ENCODE measurements at regions of chr15 and their contacts with region 1.

Region 1: GRCh38 chr15:78108299-78109084 is 16.1 kb downstream of the SH2D7 start:
- DNase-seq: peak; percentile 38
- ATAC-seq: peak; percentile 92
- H3K4me3 ChIP-seq: no peak overlapping the region
- H3K27ac ChIP-seq: no peak overlapping the region
- H3K4me1 ChIP-seq: no peaks in the 10 kb centered on the region
- H3K27me3 ChIP-seq: no peaks in the 10 kb centered on the region
- CTCF ChIP-seq: peak; percentile 95

Region 2: GRCh38 chr15:77959432-77959879 is 149.0 kb before region 1 on chr15:
- CTCF ChIA-PET with region 1: interaction called, 17 read pairs
- POLR2A ChIA-PET with region 1: no interaction called
- in situ Hi-C with region 1: no loop called
- intact Hi-C with region 1: loop called (anchors 2 kb)
- DNase-seq: no peak
- ATAC-seq: peak; percentile 100
- H3K4me3 ChIP-seq: peak overlapping the region; percentile 23 to 43
- H3K27ac ChIP-seq: no peak overlapping the region; the same call in 1 of the 2 replicates
- H3K4me1 ChIP-seq: peaks cover 3% of the 10 kb centered on the region; the same call in 1 of the 2 replicates
- H3K27me3 ChIP-seq: no peaks in the 10 kb centered on the region; the same call in 1 of the 2 replicates
- CTCF ChIP-seq: peak; percentile 97

Region 3: DNA sequence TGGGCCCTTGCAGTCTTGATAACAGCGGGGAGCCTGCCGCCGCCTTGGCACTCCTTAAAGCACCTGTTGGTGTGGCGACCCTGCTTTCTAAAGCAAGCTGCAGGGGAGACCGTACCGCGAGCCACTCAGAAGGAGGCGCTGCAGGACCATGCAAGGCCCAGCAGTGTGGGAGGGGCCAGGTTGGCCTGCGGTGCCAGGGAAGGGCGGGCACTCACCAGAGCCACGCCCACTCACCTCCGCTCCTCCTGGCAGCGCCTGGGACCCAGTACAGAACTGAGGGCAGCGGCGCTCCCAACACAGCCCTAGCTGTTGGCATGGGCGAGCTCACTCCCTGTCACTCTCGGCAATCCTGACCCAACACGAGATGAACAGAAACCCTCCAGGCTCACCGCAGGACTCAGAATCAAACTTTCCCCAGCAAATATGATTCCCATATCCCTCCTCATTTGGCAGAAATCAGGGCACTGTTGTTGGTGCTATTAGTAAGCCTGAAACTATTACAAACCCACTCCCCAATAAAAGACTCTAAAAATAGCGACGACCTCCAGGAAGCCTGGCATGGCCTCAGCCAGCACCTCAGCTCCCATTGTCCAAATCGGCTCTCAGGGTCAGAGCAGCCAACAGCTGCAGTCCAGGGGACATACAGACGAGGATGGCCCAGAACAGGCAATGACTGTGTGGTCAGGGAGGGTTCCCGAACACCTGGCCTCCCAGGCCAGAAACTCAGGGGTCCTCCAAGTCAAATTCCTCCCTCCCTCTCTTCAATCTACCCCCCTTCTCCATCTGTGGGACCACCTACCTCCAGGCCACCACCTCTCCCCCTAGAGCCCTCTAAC is 108.2 kb before region 1 on chr15:
- CTCF ChIA-PET with region 1: interaction called, 13 read pairs
- POLR2A ChIA-PET with region 1: no interaction called
- in situ Hi-C with region 1: no loop called
- intact Hi-C with region 1: loop called (anchors 1 kb)
- DNase-seq: no peak
- ATAC-seq: peak; percentile 92
- H3K4me3 ChIP-seq: no peak overlapping the region
- H3K27ac ChIP-seq: no peak overlapping the region
- H3K4me1 ChIP-seq: 0 out of 2 replicates have a peak, but pooled peaks cover 7% of the 10 kb centered on the region
- H3K27me3 ChIP-seq: no peaks in the 10 kb centered on the region
- CTCF ChIP-seq: no peak; the same call in 1 of the 2 replicates

Region 4: GRCh38 chr15:78149068-78149804 is 40.7 kb after region 1 on chr15 and contains the start of gene IDH3A:
- CTCF ChIA-PET with region 1: no interaction called
- POLR2A ChIA-PET with region 1: no interaction called
- in situ Hi-C with region 1: no loop called
- intact Hi-C with region 1: no loop called
- DNase-seq: peak; percentile 71
- ATAC-seq: peak; percentile 98
- H3K4me3 ChIP-seq: peak within 1 kb of the TSS; percentile 64 to 87
- H3K27ac ChIP-seq: peak within 1 kb of the TSS; percentile 93
- H3K4me1 ChIP-seq: peaks cover 13% of the 10 kb centered on the region
- H3K27me3 ChIP-seq: no peaks in the 10 kb centered on the region
- CTCF ChIP-seq: no peak
- total RNA-seq, gene IDH3A: 116 TPM

Region 5: DNA sequence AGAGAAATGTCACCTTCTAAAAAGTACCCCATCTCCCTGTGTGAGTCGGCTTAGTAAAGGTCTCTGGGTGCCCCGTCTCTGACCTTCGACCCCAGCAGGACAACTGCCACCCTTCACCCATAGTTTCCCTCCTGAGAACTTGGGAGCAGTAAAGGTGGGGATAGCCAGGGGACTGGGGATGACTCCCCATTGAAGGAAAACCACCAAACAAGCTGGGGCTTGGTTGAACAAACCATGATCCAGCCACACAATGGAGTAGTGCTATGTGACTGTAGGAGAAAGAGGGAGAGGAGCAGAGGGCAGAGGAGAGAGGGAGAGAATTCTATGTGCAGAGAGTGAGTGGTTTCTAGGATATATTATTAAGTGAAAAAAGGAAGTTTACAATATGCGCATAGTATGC is 74.3 kb after region 1 on chr15:
- CTCF ChIA-PET with region 1: interaction called, 12 read pairs
- POLR2A ChIA-PET with region 1: no interaction called
- in situ Hi-C with region 1: no loop called
- intact Hi-C with region 1: no loop called
- DNase-seq: no peak
- ATAC-seq: no peak
- H3K4me3 ChIP-seq: no peak overlapping the region
- H3K27ac ChIP-seq: no peak overlapping the region
- H3K4me1 ChIP-seq: no peaks in the 10 kb centered on the region
- H3K27me3 ChIP-seq: no peaks in the 10 kb centered on the region
- CTCF ChIP-seq: no peak

Region 6: GRCh38 chr15:78241007-78241406 is 132.5 kb after region 1 on chr15:
- CTCF ChIA-PET with region 1: interaction called, 7 read pairs
- POLR2A ChIA-PET with region 1: interaction called, 3 read pairs
- in situ Hi-C with region 1: no loop called
- intact Hi-C with region 1: loop called (anchors 2 kb)
- DNase-seq: peak; percentile 64
- ATAC-seq: peak; percentile 99
- H3K4me3 ChIP-seq: no peak overlapping the region
- H3K27ac ChIP-seq: no peak overlapping the region
- H3K4me1 ChIP-seq: no peaks in the 10 kb centered on the region
- H3K27me3 ChIP-seq: no peaks in the 10 kb centered on the region
- CTCF ChIP-seq: peak; percentile 95